PC-9 (cell line): ENCODE measurements at regions of chrX and their contacts with region 1.

Region 1: GRCh38 chrX:123779908-123780396 is 47.1 kb upstream of the THOC2 start:
- DNase-seq: peak; percentile 14 to 90
- H3K4me3 ChIP-seq: no peak overlapping the region
- H3K27ac ChIP-seq: peak overlapping the region; percentile 78
- H3K4me1 ChIP-seq: peaks cover 26% of the 10 kb centered on the region
- H3K27me3 ChIP-seq: no peaks in the 10 kb centered on the region
- CTCF ChIP-seq: no peak

Region 2: DNA sequence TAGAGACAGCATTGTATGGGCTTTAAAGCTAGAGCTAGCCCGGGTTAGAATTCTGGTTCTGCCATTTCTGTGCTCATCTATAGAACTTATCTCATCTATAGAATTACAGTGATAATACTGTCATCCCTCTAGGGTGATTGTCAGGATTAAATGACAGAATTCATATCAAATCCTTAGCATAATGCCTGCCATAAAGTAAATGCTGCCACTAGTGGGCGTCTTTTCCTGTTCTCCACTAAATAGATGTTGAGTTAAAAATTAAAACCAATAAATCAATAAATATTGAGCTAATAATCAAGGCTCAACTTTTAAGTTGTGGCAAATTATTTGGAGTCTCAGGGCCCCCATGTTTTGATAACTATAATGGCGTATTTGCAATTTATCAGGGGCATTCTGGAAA is 576.2 kb before region 1 on chrX:
- CTCF ChIA-PET with region 1: interaction called, 14 read pairs
- POLR2A ChIA-PET with region 1: no interaction called
- intact Hi-C with region 1: no loop called
- DNase-seq: no peak
- H3K4me3 ChIP-seq: no peak overlapping the region
- H3K27ac ChIP-seq: no peak overlapping the region
- H3K4me1 ChIP-seq: no peaks in the 10 kb centered on the region
- H3K27me3 ChIP-seq: no peaks in the 10 kb centered on the region
- CTCF ChIP-seq: peak; percentile 44; the same call in 1 of the 2 replicates

Region 3: GRCh38 chrX:123803331-123803983 is 23.5 kb after region 1 on chrX:
- CTCF ChIA-PET with region 1: interaction called, 14 read pairs
- POLR2A ChIA-PET with region 1: no interaction called
- intact Hi-C with region 1: loop called (anchors 1 kb)
- DNase-seq: peak; percentile 71 to 99
- H3K4me3 ChIP-seq: no peak overlapping the region
- H3K27ac ChIP-seq: peak overlapping the region; percentile 65
- H3K4me1 ChIP-seq: peaks cover 59% of the 10 kb centered on the region
- H3K27me3 ChIP-seq: no peaks in the 10 kb centered on the region
- CTCF ChIP-seq: no peak

Region 4: DNA sequence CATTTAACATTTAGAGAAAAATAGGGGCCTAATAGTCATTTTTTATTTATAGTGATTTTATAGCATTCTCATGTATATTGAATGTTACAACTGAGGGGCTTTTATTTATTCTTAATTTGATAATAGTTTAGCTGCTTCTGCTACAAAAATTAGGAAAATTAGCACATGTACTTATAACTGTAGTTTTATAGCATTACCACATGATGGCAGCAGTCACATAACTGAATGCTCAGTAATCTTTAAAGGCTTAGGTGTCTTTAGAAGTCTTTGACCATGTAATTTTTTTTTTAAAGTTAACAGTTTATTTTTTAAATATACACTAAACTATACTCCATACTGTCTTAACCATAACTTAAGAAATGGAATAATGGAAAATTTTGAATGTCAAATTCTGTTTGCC is 318.1 kb after region 1 on chrX:
- CTCF ChIA-PET with region 1: no interaction called
- POLR2A ChIA-PET with region 1: no interaction called
- intact Hi-C with region 1: no loop called
- DNase-seq: no peak
- H3K4me3 ChIP-seq: no peak overlapping the region
- H3K27ac ChIP-seq: no peak overlapping the region
- H3K4me1 ChIP-seq: no peaks in the 10 kb centered on the region
- H3K27me3 ChIP-seq: no peaks in the 10 kb centered on the region
- CTCF ChIP-seq: peak; percentile 72